ENCODE measurements at regions of chr14 and their contacts with region 1.

Region 1: GRCh38 chr14:55123101-55123500 is 6.0 kb upstream of the LGALS3 start:
- DNase-seq: peak; percentile 40
- H3K4me3 ChIP-seq: no peak overlapping the region
- H3K27ac ChIP-seq: peak overlapping the region; percentile 80 to 88
- H3K4me1 ChIP-seq: peaks cover 7 to 15% of the 10 kb centered on the region in 2 experiments
- H3K27me3 ChIP-seq: no peaks in the 10 kb centered on the region
- CTCF ChIP-seq: no peak
- EP300 ChIP-seq: no peak
- RAD21 ChIP-seq: no peak

Region 2: GRCh38 chr14:55043528-55043927 is 79.6 kb before region 1 on chr14:
- CTCF ChIA-PET with region 1: no interaction called
- POLR2A ChIA-PET with region 1: no interaction called
- DNase-seq: no peak
- H3K4me3 ChIP-seq: no peak overlapping the region
- H3K27ac ChIP-seq: no peak overlapping the region
- H3K4me1 ChIP-seq: no peaks in the 10 kb centered on the region; a peak in 2 of 4 replicates
- H3K27me3 ChIP-seq: no peaks in the 10 kb centered on the region
- CTCF ChIP-seq: no peak
- EP300 ChIP-seq: no peak
- RAD21 ChIP-seq: no peak

Region 3: GRCh38 chr14:55094321-55095157 is 28.6 kb before region 1 on chr14:
- CTCF ChIA-PET with region 1: interaction called, 10 read pairs
- POLR2A ChIA-PET with region 1: no interaction called
- DNase-seq: no peak
- H3K4me3 ChIP-seq: no peak overlapping the region
- H3K27ac ChIP-seq: no peak overlapping the region; a peak in 1 of 4 replicates
- H3K4me1 ChIP-seq: peaks cover 7 to 26% of the 10 kb centered on the region in 2 experiments
- H3K27me3 ChIP-seq: no peaks in the 10 kb centered on the region
- CTCF ChIP-seq: no peak
- EP300 ChIP-seq: no peak
- RAD21 ChIP-seq: no peak